ENCODE measurements at regions of chr16 and their contacts with region 1.

Region 1: DNA sequence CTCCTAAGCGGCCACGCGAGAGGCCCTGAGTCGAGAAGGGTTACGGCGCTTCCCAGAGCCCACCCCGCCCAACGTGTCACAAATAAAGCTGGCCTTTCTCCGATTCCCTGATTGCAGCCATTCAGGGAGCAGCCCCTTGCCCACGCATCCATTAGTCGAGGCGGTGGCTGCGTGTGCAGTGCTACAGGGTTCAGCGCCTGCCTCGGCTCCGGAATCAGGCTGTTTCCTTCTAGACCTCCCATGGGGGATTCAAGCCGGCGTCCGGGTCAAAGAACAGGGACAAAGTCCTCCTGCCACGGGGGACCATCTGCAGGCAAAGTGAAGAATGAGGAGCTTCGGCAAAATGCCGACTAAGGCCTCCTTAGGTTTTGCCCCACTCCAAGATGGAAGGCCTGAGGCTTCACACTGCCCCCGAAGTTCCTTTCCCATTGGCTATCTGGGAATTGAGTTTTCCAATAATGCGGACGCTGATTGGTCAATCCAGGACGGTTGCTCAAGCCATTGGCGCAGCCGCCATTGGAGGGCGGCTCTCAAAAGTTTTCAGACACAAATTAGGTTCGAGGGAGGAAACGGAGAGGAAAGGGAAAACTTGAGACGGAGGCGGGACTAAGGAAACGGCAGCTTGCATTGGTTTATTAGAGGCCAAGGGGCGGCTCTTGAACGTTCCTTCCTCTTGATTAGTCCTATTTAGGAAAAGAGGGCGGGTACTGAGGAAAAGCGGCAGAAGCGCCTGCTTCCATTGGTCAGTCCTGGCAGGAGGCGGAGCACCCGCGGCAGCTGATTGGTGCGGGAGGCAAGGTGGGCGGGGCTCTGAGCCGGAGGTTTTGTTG is 430 bp upstream of the KATNB1 start:
- DNase-seq: peak; percentile 100
- ATAC-seq: peak; percentile 91
- H3K4me3 ChIP-seq: peak overlapping the region; percentile 82 to 91 (median 82)
- H3K27ac ChIP-seq: peak overlapping the region; percentile 81
- H3K4me1 ChIP-seq: peaks cover 37% of the 10 kb centered on the region
- H3K27me3 ChIP-seq: no peaks in the 10 kb centered on the region; a peak in 1 of 5 replicates
- CTCF ChIP-seq: no peak; the same call in 1 of the 2 replicates
- EP300 ChIP-seq: peak; percentile 20 to 34; a peak in 1 of 4 replicates
- POLR2A ChIP-seq: peak; percentile 89 to 90; a peak in 3 of 4 replicates
- RAD21 ChIP-seq: peak; percentile 61; the same call in 1 of the 2 replicates

Region 2: GRCh38 chr16:56608043-56608875 is 1126.9 kb before region 1 on chr16 and contains the start of gene MT2A:
- CTCF ChIA-PET with region 1: no interaction called
- POLR2A ChIA-PET with region 1: no interaction called
- in situ Hi-C with region 1: no loop called
- intact Hi-C with region 1: no loop called
- DNase-seq: peak; percentile 94
- ATAC-seq: peak; percentile 76
- H3K4me3 ChIP-seq: peak within 1 kb of the TSS; percentile 75 to 84 (median 78)
- H3K27ac ChIP-seq: peak within 1 kb of the TSS; percentile 93
- H3K4me1 ChIP-seq: peaks cover 72% of the 10 kb centered on the region
- H3K27me3 ChIP-seq: no peaks in the 10 kb centered on the region; a peak in 1 of 5 replicates
- CTCF ChIP-seq: peak; percentile 23
- EP300 ChIP-seq: peak in 1 of 2 experiments; percentile 22; a peak in 2 of 4 replicates
- POLR2A ChIP-seq: peak; percentile 87 to 89
- RAD21 ChIP-seq: peak; percentile 73
- total RNA-seq, gene MT2A: 371 and 409 TPM in 2 replicates

Region 3: DNA sequence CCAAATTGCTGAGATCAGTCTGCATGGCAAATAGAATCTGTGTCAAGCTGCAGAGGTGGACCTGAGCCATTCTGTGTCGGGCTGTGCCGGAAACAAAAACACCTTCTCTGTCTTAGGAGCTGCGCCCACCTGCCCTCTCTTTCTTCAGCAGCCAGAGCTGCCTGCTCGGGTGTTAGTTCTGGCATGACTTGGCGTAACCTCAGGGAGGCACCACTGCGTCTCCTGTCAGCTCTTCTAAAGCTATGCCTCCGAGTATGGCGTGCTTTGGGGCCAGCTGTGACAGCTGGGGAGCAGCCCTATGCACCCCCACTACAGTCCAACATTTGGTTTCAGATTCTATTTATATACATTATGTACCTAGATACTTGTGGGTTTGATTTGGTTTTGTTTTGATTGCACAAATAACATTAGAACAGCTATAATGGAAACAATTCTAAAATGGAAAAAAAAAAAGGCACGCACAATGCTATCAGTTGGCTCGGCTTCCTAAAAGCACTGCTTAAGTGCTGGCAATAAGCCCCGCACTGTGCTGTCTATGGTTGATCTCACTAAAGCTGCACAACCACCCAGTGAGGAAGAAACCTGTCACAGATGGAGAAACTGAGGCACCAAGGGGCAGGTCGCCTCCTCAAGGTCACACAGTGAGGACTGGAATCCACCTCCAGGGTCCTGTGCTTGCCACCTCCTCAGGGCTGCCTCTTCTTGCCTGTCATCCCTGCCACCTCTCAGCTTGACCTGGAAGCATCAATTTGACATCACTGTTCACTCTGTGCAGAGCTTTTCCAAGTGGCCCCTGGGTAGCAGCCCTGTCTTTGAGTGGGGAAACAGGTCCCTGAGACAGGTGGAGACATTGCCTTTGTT is 125.4 kb before region 1 on chr16:
- CTCF ChIA-PET with region 1: no interaction called
- POLR2A ChIA-PET with region 1: interaction called, 16 read pairs
- in situ Hi-C with region 1: no loop called
- intact Hi-C with region 1: no loop called
- DNase-seq: no peak
- ATAC-seq: no peak
- H3K4me3 ChIP-seq: no peak overlapping the region
- H3K27ac ChIP-seq: no peak overlapping the region
- H3K4me1 ChIP-seq: peaks cover 57% of the 10 kb centered on the region
- H3K27me3 ChIP-seq: peaks cover 4 to 27% of the 10 kb centered on the region in 2 experiments; a peak in 3 of 5 replicates
- CTCF ChIP-seq: peak; percentile 43; the same call in 1 of the 2 replicates
- EP300 ChIP-seq: no peak
- POLR2A ChIP-seq: no peak
- RAD21 ChIP-seq: no peak

Region 4: GRCh38 chr16:57660715-57661463 is 74.3 kb before region 1 on chr16:
- CTCF ChIA-PET with region 1: no interaction called
- POLR2A ChIA-PET with region 1: interaction called, 12 read pairs
- in situ Hi-C with region 1: no loop called
- intact Hi-C with region 1: no loop called
- DNase-seq: peak; percentile 59
- ATAC-seq: peak; percentile 86
- H3K4me3 ChIP-seq: peak overlapping the region in 1 of 3 experiments; percentile 17; a peak in 1 of 6 replicates
- H3K27ac ChIP-seq: peak overlapping the region; percentile 52
- H3K4me1 ChIP-seq: peaks cover 36% of the 10 kb centered on the region
- H3K27me3 ChIP-seq: no peaks in the 10 kb centered on the region
- CTCF ChIP-seq: peak; percentile 85
- EP300 ChIP-seq: no peak
- POLR2A ChIP-seq: 0 out of 4 replicates have a peak, but pooled peaks of 1 of the 2 experiments have one; percentile 41
- RAD21 ChIP-seq: peak; percentile 54

Region 5: DNA sequence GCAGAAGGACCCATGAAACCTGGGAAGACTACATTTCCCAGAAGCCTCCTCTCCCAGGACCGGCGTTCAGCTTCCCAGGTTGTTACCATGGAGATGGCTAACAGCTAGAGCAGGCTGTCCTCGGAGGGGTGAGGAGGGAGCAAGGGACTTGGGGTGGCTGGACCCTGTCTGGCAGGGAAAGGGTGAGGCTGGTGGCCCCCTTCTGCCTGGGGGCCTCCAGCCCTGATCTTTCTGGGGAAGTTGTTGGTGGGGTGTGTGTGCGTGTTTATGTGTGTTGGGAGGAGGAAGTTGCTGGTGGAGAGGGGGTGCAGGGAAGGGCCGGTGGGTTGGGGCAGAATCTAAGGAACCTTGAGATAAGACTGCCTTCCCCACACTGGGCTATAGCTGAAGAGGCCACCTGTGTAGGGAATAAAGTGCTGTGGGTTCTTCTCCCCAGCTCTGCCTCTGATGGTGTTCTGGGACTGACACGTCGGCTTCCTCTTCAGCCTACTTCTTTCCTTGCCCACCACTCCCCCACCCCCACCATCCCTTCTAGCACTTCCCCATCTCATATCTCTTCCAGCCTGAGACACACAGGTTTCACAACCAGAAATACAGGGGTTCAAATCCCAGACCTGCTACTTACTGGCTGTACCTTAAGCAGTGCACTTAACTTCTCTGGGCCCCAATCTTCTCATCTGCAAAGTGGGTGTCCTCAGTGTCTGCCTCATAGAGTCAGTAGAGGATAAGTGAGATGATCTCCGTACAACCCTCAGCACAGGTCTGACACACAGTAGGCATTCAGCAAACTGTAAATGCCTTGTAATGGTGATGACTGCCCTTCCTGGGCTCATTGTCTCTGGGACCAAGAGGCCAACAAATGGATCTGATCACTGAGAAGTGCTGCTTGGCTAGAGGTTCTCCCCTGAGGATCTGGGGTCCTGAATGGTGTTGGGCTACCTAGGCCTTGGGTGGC is 40.1 kb before region 1 on chr16 and contains the start of gene DRC7:
- CTCF ChIA-PET with region 1: no interaction called
- POLR2A ChIA-PET with region 1: interaction called, 19 read pairs
- in situ Hi-C with region 1: no loop called
- intact Hi-C with region 1: no loop called
- DNase-seq: peak; percentile 86
- ATAC-seq: peak; percentile 92
- H3K4me3 ChIP-seq: peak within 1 kb of the TSS; percentile 30 to 54 (median 42)
- H3K27ac ChIP-seq: peak within 1 kb of the TSS; percentile 59
- H3K4me1 ChIP-seq: peaks cover 81% of the 10 kb centered on the region
- H3K27me3 ChIP-seq: no peaks in the 10 kb centered on the region
- CTCF ChIP-seq: no peak
- EP300 ChIP-seq: no peak
- POLR2A ChIP-seq: no peak
- RAD21 ChIP-seq: peak; percentile 20; the same call in 1 of the 2 replicates
- total RNA-seq, gene DRC7: 2.7 and 3.4 TPM in 2 replicates

Region 6: GRCh38 chr16:57781741-57782606 is 46.8 kb after region 1 on chr16:
- CTCF ChIA-PET with region 1: no interaction called
- POLR2A ChIA-PET with region 1: interaction called, 17 read pairs
- in situ Hi-C with region 1: no loop called
- intact Hi-C with region 1: no loop called
- DNase-seq: peak; percentile 94
- ATAC-seq: peak; percentile 90
- H3K4me3 ChIP-seq: peak overlapping the region in 1 of 3 experiments; percentile 38; a peak in 3 of 6 replicates
- H3K27ac ChIP-seq: peak overlapping the region; percentile 81
- H3K4me1 ChIP-seq: peaks cover 53% of the 10 kb centered on the region
- H3K27me3 ChIP-seq: no peaks in the 10 kb centered on the region
- CTCF ChIP-seq: peak; percentile 93
- EP300 ChIP-seq: peak; percentile 53 to 82; a peak in 2 of 4 replicates
- POLR2A ChIP-seq: peak; percentile 51 to 72; a peak in 3 of 4 replicates
- RAD21 ChIP-seq: peak; percentile 88

Region 7: DNA sequence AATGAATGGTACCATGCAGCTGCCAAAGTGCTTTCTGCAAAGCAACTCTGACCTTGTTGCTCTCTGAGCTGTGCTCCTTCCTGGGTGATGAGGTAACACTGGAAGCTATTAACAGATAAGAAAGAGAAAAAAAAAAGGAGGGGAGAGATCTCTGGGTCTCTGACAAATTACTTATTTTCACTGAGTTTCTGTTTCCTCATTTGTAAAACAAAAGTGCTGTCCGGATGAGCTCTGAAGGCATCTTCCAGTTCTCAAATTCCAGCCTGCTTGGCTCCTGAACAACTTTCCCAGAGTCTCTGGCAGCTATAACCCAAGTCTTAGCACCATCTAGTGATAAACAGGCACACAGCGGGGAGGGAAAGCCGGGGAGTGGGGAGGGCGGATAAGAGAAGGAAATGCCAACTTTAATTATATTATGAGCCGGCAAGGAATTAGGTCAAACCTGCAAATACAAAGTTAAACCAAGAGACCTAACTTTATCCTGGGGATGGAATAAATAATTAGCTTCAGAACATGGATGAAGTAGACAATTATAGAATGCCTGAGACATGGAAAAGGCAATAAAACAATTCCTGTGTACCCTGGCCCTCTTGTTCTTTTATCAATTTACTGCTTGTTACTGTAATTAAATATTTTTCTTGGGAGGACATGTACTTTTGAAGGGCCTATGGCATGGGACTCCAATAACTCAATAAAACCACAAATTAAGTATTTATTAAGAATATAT is 128.5 kb after region 1 on chr16:
- CTCF ChIA-PET with region 1: no interaction called
- POLR2A ChIA-PET with region 1: interaction called, 10 read pairs
- in situ Hi-C with region 1: no loop called
- intact Hi-C with region 1: no loop called
- DNase-seq: peak; percentile 68
- ATAC-seq: peak; percentile 54
- H3K4me3 ChIP-seq: peak overlapping the region in 2 of 3 experiments; percentile 65 to 72; a peak in 2 of 6 replicates
- H3K27ac ChIP-seq: peak overlapping the region; percentile 54
- H3K4me1 ChIP-seq: peaks cover 86% of the 10 kb centered on the region
- H3K27me3 ChIP-seq: no peaks in the 10 kb centered on the region
- CTCF ChIP-seq: peak; percentile 83
- EP300 ChIP-seq: no peak; a peak in 2 of 4 replicates
- POLR2A ChIP-seq: no peak
- RAD21 ChIP-seq: peak; percentile 68

Region 8: DNA sequence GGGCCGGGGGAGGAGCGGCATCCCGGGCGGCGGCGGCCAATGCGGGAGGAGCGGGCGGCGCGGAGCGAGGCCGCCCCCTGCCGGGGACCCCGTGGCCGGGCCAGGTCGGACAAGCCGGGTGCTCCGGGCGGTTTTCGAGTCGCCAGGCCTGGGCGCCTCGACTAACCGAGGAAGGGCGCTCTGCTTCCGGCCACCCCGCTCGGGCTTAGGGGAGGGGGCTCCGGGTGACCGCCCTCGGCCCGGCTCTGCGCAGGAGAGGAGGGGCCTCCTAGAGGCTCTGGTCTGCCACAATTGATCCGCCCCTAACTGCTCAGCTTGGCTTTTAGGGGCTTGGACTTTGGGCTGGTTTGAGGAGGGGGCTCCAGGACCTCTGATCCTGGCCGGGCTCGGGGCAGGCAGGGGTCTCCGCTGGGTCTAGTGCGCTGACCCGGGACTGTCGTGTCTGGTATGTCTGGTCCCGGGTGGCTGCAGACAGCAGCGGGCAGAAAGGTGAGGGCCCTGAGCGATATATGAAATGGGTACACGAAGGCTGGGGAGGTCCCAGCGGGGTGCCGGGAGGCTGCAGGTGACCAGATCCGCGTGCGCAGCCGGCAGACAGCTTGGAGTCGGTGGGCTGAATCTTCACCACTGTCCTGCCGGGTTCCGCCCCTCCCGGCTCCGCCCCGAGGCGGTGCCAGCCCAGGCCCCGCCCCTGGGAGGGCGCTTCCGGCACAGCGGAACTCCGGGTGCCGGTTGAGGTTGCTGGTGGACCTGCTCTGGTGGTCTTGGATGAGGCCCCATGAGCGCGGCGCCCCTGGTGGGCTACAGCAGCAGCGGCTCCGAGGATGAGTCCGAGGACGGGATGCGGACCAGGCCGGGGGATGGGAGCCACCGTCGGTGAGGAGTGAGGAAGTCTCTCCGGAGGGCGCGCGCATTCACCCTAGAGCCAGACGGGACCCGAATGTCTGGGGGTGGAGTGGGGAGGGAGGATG is 265.9 kb after region 1 on chr16 and contains the start of gene USB1:
- CTCF ChIA-PET with region 1: no interaction called
- POLR2A ChIA-PET with region 1: interaction called, 15 read pairs
- in situ Hi-C with region 1: no loop called
- intact Hi-C with region 1: loop called (anchors 10 kb)
- DNase-seq: peak; percentile 88
- ATAC-seq: peak; percentile 92
- H3K4me3 ChIP-seq: peak within 1 kb of the TSS; percentile 85 to 98 (median 93)
- H3K27ac ChIP-seq: peak within 1 kb of the TSS; percentile 81
- H3K4me1 ChIP-seq: peaks cover 34% of the 10 kb centered on the region
- H3K27me3 ChIP-seq: no peaks in the 10 kb centered on the region; a peak in 1 of 5 replicates
- CTCF ChIP-seq: peak; percentile 72
- EP300 ChIP-seq: 0 out of 4 replicates have a peak, but pooled peaks of 1 of the 2 experiments have one; percentile 9
- POLR2A ChIP-seq: peak; percentile 68 to 91
- RAD21 ChIP-seq: peak; percentile 85
- total RNA-seq, gene USB1: 16.7 and 33.5 TPM in 2 replicates

Region 9: DNA sequence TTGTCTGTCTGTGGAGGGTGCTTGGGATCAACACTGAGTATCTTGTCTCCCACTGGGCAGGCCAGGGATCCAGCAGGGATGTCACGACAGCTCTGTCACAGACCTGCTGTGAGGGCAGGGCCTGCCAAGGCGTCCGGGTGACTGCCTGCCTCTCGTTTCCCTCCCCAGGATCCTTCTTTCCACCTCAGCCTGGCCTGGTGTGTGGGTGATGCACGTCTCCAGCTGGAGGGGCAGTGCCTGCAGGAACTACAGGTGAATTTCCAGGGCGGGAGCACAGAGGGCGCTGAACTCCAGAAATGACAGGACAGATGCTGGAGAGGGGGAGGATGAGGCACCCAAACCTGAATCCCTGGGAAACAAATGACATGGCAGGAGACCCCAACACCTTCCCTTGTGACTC is 283.7 kb after region 1 on chr16:
- CTCF ChIA-PET with region 1: no interaction called
- POLR2A ChIA-PET with region 1: no interaction called
- in situ Hi-C with region 1: no loop called
- intact Hi-C with region 1: no loop called
- DNase-seq: no peak
- ATAC-seq: no peak
- H3K4me3 ChIP-seq: no peak overlapping the region
- H3K27ac ChIP-seq: no peak overlapping the region
- H3K4me1 ChIP-seq: peaks cover 24% of the 10 kb centered on the region
- H3K27me3 ChIP-seq: no peaks in the 10 kb centered on the region
- CTCF ChIP-seq: peak; percentile 34
- EP300 ChIP-seq: no peak
- POLR2A ChIP-seq: no peak
- RAD21 ChIP-seq: no peak